PC-3 (cell line): ENCODE measurements at regions of chr1 and their contacts with region 1.

Region 1: DNA sequence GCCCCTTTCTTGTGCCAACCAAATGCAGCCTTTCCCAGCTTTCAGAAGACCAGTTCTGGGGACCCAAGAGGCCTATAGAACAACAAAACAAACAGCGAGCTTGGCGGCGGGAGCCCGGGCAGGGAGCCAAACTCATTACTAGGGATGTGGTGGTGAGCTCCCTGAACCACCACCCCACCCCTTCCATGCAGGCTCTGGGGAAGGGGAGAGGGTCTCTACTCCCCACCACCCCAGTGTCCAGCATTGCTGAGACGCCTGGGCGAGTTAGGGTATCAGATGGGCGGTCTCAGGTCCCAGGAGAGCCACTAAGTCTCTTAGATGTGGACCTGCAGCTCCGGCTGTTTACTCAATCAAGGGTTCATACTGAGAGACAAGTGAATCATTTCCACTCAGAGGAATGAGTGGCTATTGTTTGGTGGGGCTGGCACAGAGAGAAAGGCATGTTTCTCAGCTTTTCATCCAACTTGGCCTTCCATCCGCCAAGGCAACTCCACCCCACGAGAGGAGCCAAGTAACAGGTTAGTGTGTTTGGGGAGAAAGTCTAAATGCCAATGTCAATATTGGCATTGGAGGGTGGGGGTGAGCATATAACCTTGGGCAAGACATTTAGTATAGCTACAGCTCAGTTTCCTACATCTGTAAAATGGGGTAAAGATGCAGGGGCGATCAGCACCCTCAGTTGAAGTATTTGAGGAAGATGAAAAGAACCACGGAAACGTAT is 40.9 kb downstream of the PLXNA2 start:
- DNase-seq: peak; percentile 98
- ATAC-seq: peak; percentile 80
- H3K4me3 ChIP-seq: peak overlapping the region; percentile 49
- H3K27ac ChIP-seq: peak overlapping the region; percentile 91
- H3K4me1 ChIP-seq: peaks cover 49% of the 10 kb centered on the region
- H3K27me3 ChIP-seq: no peaks in the 10 kb centered on the region
- CTCF ChIP-seq: no peak

Region 2: GRCh38 chr1:208132287-208132883 is 70.9 kb before region 1 on chr1:
- CTCF ChIA-PET with region 1: interaction called, 7 read pairs
- POLR2A ChIA-PET with region 1: no interaction called
- intact Hi-C with region 1: loop called (anchors 1 kb)
- DNase-seq: peak; percentile 93
- ATAC-seq: peak; percentile 100
- H3K4me3 ChIP-seq: peak overlapping the region; percentile 2; the same call in 1 of the 2 replicates
- H3K27ac ChIP-seq: peak overlapping the region; percentile 46
- H3K4me1 ChIP-seq: peaks cover 16% of the 10 kb centered on the region
- H3K27me3 ChIP-seq: no peaks in the 10 kb centered on the region
- CTCF ChIP-seq: peak; percentile 99

Region 3: GRCh38 chr1:208219659-208220282 is 16.5 kb after region 1 on chr1:
- CTCF ChIA-PET with region 1: interaction called, 7 read pairs
- POLR2A ChIA-PET with region 1: interaction called, 3 read pairs
- intact Hi-C with region 1: loop called (anchors 1 kb)
- DNase-seq: peak; percentile 92
- ATAC-seq: peak; percentile 90
- H3K4me3 ChIP-seq: peak overlapping the region; percentile 48
- H3K27ac ChIP-seq: peak overlapping the region; percentile 89
- H3K4me1 ChIP-seq: peaks cover 55% of the 10 kb centered on the region
- H3K27me3 ChIP-seq: no peaks in the 10 kb centered on the region
- CTCF ChIP-seq: no peak

Region 4: DNA sequence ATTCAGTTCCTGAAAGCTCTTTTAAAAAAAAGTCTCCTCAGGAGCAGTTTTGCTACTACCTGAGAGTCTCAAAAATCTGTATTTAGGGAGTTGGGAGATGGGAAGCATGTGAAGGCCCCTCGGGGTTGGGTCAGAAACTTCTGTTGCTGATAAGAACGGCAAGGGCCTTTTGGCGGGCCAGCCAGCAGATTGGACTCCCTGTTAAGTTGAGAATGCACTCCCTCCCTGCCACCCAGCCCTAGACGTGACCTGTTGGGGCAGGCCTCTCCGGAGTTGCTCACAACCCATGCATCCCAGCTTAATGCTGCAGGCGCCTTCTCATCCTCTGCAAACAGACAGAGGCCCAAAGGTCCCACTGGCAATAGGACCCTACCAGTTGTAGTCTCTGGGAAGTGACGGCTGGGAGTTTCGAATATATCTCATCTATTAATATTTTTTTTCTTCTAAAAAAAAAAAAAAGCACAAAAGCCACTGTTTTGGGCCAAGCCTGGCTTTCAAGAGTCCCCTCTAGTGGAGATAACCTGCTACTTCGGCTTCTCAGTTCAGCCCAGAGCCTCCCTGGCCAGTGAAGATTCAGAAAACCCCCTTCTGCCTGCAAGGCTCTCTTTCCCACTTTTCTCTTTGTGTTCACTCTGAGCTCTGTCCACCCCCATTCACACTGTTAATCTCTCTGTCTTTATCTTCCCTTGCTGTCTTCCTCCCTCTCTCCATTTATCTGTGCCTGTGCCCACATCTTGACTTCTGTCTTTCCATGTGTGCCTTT is 35.6 kb after region 1 on chr1:
- CTCF ChIA-PET with region 1: interaction called, 11 read pairs
- POLR2A ChIA-PET with region 1: interaction called, 14 read pairs
- intact Hi-C with region 1: loop called (anchors 1 kb)
- DNase-seq: peak; percentile 71
- ATAC-seq: peak; percentile 30
- H3K4me3 ChIP-seq: no peak overlapping the region
- H3K27ac ChIP-seq: no peak overlapping the region
- H3K4me1 ChIP-seq: peaks cover 21% of the 10 kb centered on the region
- H3K27me3 ChIP-seq: no peaks in the 10 kb centered on the region
- CTCF ChIP-seq: peak; percentile 82